Dorsolateral prefrontal cortex (tissue), 120 donors: ENCODE measurements at regions of chr17 and their contacts with region 1.

Region 1: DNA sequence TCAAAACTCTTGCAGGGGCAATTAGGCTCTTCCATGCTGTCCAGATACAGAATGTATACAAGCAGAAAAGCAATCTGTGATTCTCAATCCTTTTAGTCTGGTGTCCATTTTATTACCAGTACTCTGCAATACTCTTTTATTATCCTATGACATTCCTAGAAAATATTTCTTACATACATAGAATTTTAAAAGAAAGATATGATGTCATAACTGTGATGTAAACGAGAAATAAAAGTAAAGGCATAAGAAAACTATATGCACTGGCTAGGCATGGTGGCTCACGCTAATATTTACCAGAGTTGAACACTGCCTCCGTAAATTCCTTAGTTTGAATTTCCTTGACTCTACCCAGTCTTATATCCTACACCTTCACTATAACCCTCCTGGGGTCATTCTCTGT is 55.0 kb downstream of the EFCAB5 start:
- DNase-seq: no peak
- H3K4me3 ChIP-seq: no peak overlapping the region
- H3K27ac ChIP-seq: no peak overlapping the region
- H3K27me3 ChIP-seq: no peaks in the 10 kb centered on the region
- CTCF ChIP-seq: no peak

Region 2: GRCh38 chr17:29771551-29771950 is 224.9 kb before region 1 on chr17:
- intact Hi-C with region 1: no loop called
- DNase-seq: no peak
- H3K4me3 ChIP-seq: no peak overlapping the region
- H3K27ac ChIP-seq: peak overlapping the region in 4 of 59 donors; percentile 4 to 53 (median 18)
- H3K27me3 ChIP-seq: no peaks in the 10 kb centered on the region
- CTCF ChIP-seq: no peak

Region 3: GRCh38 chr17:29936724-29937123 is 59.7 kb before region 1 on chr17:
- intact Hi-C with region 1: loop called in 1 of 2 experiments (anchors 5 kb)
- DNase-seq: no peak
- H3K4me3 ChIP-seq: no peak overlapping the region
- H3K27ac ChIP-seq: no peak overlapping the region
- H3K27me3 ChIP-seq: no peaks in the 10 kb centered on the region
- CTCF ChIP-seq: no peak

Region 4: DNA sequence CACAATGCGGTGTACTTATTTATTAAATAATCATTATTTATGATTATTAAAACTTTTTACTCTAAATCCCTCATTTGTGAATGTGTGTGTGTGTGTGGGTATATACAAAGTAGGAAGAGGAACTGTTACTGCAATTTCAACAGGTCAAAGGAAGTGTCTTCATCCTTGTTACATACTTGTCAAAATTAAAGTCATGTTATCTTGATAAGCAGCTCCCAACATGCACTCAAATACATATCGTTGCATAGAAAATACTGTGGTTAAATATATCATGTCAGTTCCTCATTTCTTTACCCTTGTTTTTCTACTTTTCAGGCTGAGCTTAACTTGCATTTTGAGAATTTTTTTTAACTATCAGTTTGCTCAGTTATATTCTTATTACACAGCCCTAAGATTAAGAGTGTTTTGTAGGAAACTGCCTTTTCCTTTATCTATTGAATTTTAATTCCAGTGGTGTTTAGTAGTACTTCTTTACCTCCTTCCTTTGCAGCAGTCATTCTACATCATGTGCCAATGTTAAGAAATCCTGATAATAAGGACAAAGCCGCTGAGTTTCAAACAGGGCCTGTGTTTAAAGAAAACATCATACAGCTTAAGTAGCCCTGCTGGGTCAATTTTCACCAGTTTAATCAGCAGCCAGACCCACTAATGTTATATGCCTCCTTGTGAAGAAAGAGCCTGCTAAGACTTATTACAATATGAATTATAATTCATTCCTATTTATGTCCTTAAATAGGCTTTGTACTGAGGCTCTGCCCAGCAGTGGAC is 47.8 kb before region 1 on chr17:
- intact Hi-C with region 1: no loop called
- DNase-seq: no peak
- H3K4me3 ChIP-seq: no peak overlapping the region
- H3K27ac ChIP-seq: no peak overlapping the region
- H3K27me3 ChIP-seq: no peaks in the 10 kb centered on the region
- CTCF ChIP-seq: no peak